Left ventricle myocardium superior (tissue), 1 donor: ENCODE measurements at regions of chr3 and their contacts with region 1.

Region 1: GRCh38 chr3:68328049-68328448 is 604.3 kb downstream of the TAFA4 start:
- DNase-seq: no peak
- ATAC-seq: no peak

Region 2: DNA sequence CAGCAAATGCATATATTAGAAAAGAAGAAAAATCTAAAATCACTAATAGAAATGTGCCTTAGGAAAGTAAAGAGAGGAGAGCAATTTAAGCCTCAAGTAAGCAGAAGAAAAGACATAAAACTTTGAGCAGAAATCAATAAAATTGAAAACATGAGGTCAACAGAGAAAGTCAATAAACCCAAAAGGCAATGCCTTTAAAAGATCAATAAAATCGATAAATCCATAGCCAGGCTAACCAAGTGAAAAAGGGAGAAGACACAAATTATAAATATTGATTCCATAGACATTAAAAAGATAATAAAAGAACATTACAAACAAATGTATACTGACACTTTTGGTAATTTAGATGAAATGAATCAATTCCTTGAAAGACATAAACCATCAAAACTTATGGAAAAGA is 572.4 kb before region 1 on chr3:
- intact Hi-C with region 1: loop called (anchors 5 kb)
- DNase-seq: no peak
- ATAC-seq: no peak

Region 3: DNA sequence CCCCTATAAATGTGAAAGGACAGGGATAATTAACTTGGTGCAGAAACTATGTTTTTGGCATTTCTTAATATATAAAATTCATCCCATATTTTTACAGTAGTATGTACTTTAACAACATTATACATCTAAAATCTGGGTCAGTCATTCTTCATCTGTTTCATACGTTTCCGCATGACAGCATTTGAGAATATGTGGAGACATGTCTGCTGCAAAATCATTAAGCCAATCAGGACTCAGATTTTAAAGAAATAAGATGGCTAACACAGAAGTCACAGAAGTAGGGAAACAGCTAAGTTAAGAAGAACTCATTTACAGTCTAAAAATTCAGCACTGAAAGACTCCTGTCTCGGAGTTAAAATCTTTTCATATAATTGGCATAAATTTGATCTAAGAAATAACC is 403.9 kb after region 1 on chr3:
- intact Hi-C with region 1: no loop called
- DNase-seq: no peak
- ATAC-seq: no peak